CD8-positive, alpha-beta T cell (primary cell): ENCODE measurements at regions of chrX and their contacts with region 1.

Region 1: GRCh38 chrX:53317365-53318069 is 36.1 kb upstream of the IQSEC2 start:
- DNase-seq: peak; percentile 53 to 84 (median 71)
- ATAC-seq: peak; percentile 89
- H3K4me3 ChIP-seq: no peak overlapping the region
- H3K4me3 Mint-ChIP-seq: no peak overlapping the region
- H3K27ac ChIP-seq: no peak overlapping the region
- H3K27ac Mint-ChIP-seq: no peak overlapping the region
- H3K4me1 ChIP-seq: peaks cover 9% of the 10 kb centered on the region
- H3K4me1 Mint-ChIP-seq: peaks cover 17% of the 10 kb centered on the region
- H3K27me3 ChIP-seq: peaks cover 0 to 7% of the 10 kb centered on the region in 2 experiments
- H3K27me3 Mint-ChIP-seq: peaks cover 22% of the 10 kb centered on the region
- CTCF ChIP-seq: peak; percentile 71

Region 2: DNA sequence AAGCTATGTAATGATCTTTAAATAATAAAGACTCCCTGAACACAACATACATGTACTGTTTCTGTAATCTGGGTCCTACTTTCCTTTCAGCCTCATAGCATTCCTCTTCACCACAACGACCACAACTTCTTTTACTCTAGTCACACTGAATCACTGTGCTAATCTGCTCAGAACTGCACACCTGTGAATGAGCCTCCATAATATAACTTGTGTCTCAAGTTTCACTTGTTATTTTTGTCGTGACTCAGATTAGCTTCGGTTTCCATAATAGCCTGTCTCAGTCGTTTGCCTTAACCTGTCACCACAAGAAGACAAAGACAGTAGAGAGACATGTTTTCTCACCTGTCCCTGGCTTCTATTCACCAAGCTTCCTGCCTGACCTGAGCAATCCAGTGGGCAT is 1362.3 kb before region 1 on chrX:
- CTCF ChIA-PET with region 1: no interaction called
- POLR2A ChIA-PET with region 1: no interaction called
- intact Hi-C with region 1: no loop called
- DNase-seq: no peak
- ATAC-seq: no peak
- H3K4me3 ChIP-seq: no peak overlapping the region
- H3K4me3 Mint-ChIP-seq: no peak overlapping the region
- H3K27ac ChIP-seq: no peak overlapping the region
- H3K27ac Mint-ChIP-seq: no peak overlapping the region
- H3K4me1 ChIP-seq: no peaks in the 10 kb centered on the region
- H3K4me1 Mint-ChIP-seq: no peaks in the 10 kb centered on the region
- H3K27me3 ChIP-seq: no peaks in the 10 kb centered on the region
- H3K27me3 Mint-ChIP-seq: peaks cover 2% of the 10 kb centered on the region
- CTCF ChIP-seq: no peak

Region 3: DNA sequence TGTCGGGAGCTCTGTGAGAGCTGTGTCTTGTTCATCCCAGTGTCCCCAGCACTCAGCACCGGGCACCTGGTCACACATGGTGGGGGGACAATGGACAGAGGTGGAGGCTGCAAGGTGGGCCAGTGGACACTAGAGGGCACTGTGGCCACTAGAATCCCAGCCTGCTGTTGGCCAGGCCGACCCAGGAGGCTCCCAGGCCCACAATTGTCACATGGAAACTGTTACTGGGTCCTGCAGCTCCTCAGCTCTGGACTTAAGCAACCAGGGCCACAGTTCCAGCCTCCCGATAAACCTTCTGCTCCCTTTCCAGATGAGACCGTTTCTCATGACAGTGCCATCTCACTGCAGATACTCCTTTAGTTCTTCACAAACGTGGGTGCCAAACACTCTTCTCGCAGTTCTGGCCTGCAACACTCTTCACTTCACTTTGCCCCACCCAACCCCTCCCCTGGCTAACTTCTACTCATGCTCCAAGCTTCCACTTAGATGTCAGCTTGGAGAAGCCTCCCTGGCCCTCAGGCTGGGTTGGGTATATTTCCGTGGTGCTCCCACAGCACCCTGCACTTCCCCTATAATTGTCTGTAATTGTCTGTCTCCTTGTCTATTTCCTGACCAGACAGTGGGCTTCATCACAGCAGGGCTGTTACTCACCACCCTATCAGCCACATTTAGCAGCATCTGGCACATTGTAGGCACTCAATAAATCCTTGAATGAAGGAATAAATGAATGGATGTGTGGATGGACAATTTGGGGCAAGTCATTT is 32.7 kb before region 1 on chrX:
- CTCF ChIA-PET with region 1: interaction called, 36 read pairs
- POLR2A ChIA-PET with region 1: interaction called, 3 read pairs
- intact Hi-C with region 1: no loop called
- DNase-seq: peak; percentile 6 to 74 (median 42)
- ATAC-seq: peak; percentile 68
- H3K4me3 ChIP-seq: no peak overlapping the region
- H3K4me3 Mint-ChIP-seq: no peak overlapping the region
- H3K27ac ChIP-seq: no peak overlapping the region
- H3K27ac Mint-ChIP-seq: no peak overlapping the region
- H3K4me1 ChIP-seq: peaks cover 23% of the 10 kb centered on the region
- H3K4me1 Mint-ChIP-seq: peaks cover 41% of the 10 kb centered on the region
- H3K27me3 ChIP-seq: no peaks in the 10 kb centered on the region
- H3K27me3 Mint-ChIP-seq: peaks cover 2% of the 10 kb centered on the region
- CTCF ChIP-seq: peak; percentile 63

Region 4: DNA sequence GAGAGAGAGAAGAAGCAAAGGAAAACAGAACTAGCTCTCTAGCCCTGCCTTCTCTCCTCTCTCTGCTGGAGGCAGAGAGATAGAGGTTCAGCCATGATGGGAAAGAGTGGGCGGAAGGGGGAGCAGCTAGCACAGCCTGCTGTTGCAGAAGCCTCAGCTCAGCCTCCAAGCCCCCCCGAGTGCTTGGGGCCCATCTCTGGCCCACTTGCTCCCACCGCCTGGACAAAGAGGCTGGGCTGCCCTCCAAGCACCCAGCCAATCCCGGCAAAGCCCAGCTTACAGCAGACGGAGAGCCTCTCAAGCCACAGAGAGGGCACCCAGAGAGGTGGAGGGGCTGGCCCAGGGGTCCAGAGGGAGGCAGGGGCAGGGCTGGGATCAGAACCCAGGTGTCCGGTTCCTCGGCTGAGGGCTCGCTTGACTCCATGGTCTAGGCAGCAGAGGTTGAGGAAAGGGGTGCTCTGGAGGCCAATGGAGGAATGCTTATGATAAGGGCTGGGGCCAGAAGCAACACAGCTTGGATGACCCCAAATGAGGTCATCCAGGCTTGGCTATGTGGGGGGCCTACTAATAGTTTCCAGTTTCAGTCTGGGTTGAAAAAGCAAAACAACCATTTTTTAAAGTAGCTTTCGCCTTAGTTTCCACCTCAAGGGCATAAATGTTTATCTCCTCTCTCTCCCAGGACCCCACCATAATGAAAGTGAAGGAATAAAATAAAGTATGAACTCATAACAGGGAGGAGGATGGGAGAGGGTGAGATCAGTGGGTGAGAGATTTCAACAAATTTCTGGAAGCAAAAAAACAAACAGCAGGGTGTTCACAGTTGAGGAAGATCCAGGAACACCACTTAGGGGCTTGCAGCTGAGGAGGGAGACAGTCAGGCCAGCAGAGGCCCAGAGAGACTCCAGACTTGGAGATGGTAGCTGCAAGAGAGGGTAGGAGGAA is 11.2 kb before region 1 on chrX:
- CTCF ChIA-PET with region 1: interaction called, 30 read pairs
- POLR2A ChIA-PET with region 1: interaction called, 3 read pairs
- intact Hi-C with region 1: no loop called
- DNase-seq: no peak
- ATAC-seq: no peak
- H3K4me3 ChIP-seq: no peak overlapping the region
- H3K4me3 Mint-ChIP-seq: no peak overlapping the region
- H3K27ac ChIP-seq: no peak overlapping the region
- H3K27ac Mint-ChIP-seq: no peak overlapping the region
- H3K4me1 ChIP-seq: no peaks in the 10 kb centered on the region
- H3K4me1 Mint-ChIP-seq: peaks cover 2% of the 10 kb centered on the region
- H3K27me3 ChIP-seq: no peaks in the 10 kb centered on the region
- H3K27me3 Mint-ChIP-seq: no peaks in the 10 kb centered on the region
- CTCF ChIP-seq: no peak

Region 5: GRCh38 chrX:53383376-53384076 is 66.0 kb after region 1 on chrX:
- CTCF ChIA-PET with region 1: interaction called, 3 read pairs
- POLR2A ChIA-PET with region 1: no interaction called
- intact Hi-C with region 1: loop called in 1 of 2 experiments (anchors 10 kb)
- DNase-seq: no peak
- ATAC-seq: no peak
- H3K4me3 ChIP-seq: no peak overlapping the region
- H3K4me3 Mint-ChIP-seq: no peak overlapping the region
- H3K27ac ChIP-seq: no peak overlapping the region
- H3K27ac Mint-ChIP-seq: no peak overlapping the region
- H3K4me1 ChIP-seq: no peaks in the 10 kb centered on the region
- H3K4me1 Mint-ChIP-seq: no peaks in the 10 kb centered on the region
- H3K27me3 ChIP-seq: no peaks in the 10 kb centered on the region
- H3K27me3 Mint-ChIP-seq: no peaks in the 10 kb centered on the region
- CTCF ChIP-seq: no peak

Region 6: GRCh38 chrX:53433651-53434639 is 116.4 kb after region 1 on chrX and contains the start of gene HSD17B10:
- CTCF ChIA-PET with region 1: interaction called, 31 read pairs
- POLR2A ChIA-PET with region 1: no interaction called
- intact Hi-C with region 1: loop called (anchors 1 to 2 kb)
- DNase-seq: peak; percentile 59 to 91 (median 84)
- ATAC-seq: peak; percentile 97
- H3K4me3 ChIP-seq: peak within 1 kb of the TSS; percentile 55 to 74
- H3K4me3 Mint-ChIP-seq: peak within 1 kb of the TSS; percentile 97
- H3K27ac ChIP-seq: peak within 1 kb of the TSS; percentile 71 to 81
- H3K27ac Mint-ChIP-seq: peak within 1 kb of the TSS; percentile 97
- H3K4me1 ChIP-seq: peaks cover 10% of the 10 kb centered on the region
- H3K4me1 Mint-ChIP-seq: peaks cover 16% of the 10 kb centered on the region
- H3K27me3 ChIP-seq: no peaks in the 10 kb centered on the region
- H3K27me3 Mint-ChIP-seq: no peaks in the 10 kb centered on the region
- CTCF ChIP-seq: no peak
- total RNA-seq, gene HSD17B10: 23.4 to 26.2 TPM

Region 7: GRCh38 chrX:53445977-53446376 is 128.5 kb after region 1 on chrX:
- CTCF ChIA-PET with region 1: interaction called, 36 read pairs
- POLR2A ChIA-PET with region 1: interaction called, 4 read pairs
- intact Hi-C with region 1: loop called (anchors 1 kb)
- DNase-seq: peak in 7 of 9 experiments; percentile 24 to 56 (median 43)
- ATAC-seq: peak; percentile 37
- H3K4me3 ChIP-seq: no peak overlapping the region
- H3K4me3 Mint-ChIP-seq: no peak overlapping the region
- H3K27ac ChIP-seq: no peak overlapping the region
- H3K27ac Mint-ChIP-seq: no peak overlapping the region
- H3K4me1 ChIP-seq: peaks cover 4% of the 10 kb centered on the region
- H3K4me1 Mint-ChIP-seq: peaks cover 9% of the 10 kb centered on the region
- H3K27me3 ChIP-seq: no peaks in the 10 kb centered on the region
- H3K27me3 Mint-ChIP-seq: no peaks in the 10 kb centered on the region
- CTCF ChIP-seq: no peak

Region 8: GRCh38 chrX:53481816-53482465 is 164.4 kb after region 1 on chrX:
- CTCF ChIA-PET with region 1: interaction called, 44 read pairs
- POLR2A ChIA-PET with region 1: no interaction called
- intact Hi-C with region 1: loop called (anchors 1 kb)
- DNase-seq: peak; percentile 6 to 66 (median 42)
- ATAC-seq: peak; percentile 52
- H3K4me3 ChIP-seq: no peak overlapping the region
- H3K4me3 Mint-ChIP-seq: no peak overlapping the region
- H3K27ac ChIP-seq: no peak overlapping the region
- H3K27ac Mint-ChIP-seq: no peak overlapping the region
- H3K4me1 ChIP-seq: peaks cover 3% of the 10 kb centered on the region
- H3K4me1 Mint-ChIP-seq: no peaks in the 10 kb centered on the region
- H3K27me3 ChIP-seq: no peaks in the 10 kb centered on the region
- H3K27me3 Mint-ChIP-seq: peaks cover 3% of the 10 kb centered on the region
- CTCF ChIP-seq: peak; percentile 54

Region 9: DNA sequence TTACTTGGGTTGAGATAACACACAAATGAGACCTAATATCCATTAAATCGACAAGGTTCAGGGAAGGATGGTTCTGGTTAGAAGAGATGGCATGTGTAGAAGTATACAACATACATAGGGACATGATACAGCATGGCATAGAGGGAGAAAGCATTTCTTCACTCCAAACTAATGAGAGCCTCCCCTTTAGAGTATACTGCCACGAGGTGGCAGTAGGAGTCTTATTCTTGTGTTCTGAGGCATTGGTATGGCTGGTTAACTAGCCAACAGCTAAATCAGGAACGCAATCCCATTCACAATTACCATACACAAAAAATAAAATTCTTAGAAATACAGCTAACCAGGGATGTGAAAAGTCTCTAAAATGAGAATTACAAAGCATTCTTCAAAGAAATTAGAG is 1574.1 kb after region 1 on chrX:
- CTCF ChIA-PET with region 1: no interaction called
- POLR2A ChIA-PET with region 1: no interaction called
- intact Hi-C with region 1: no loop called
- DNase-seq: peak in 8 of 9 experiments; percentile 1 to 67 (median 25)
- ATAC-seq: peak; percentile 38
- H3K4me3 ChIP-seq: no peak overlapping the region
- H3K4me3 Mint-ChIP-seq: no peak overlapping the region
- H3K27ac ChIP-seq: no peak overlapping the region
- H3K27ac Mint-ChIP-seq: no peak overlapping the region
- H3K4me1 ChIP-seq: no peaks in the 10 kb centered on the region
- H3K4me1 Mint-ChIP-seq: no peaks in the 10 kb centered on the region
- H3K27me3 ChIP-seq: no peaks in the 10 kb centered on the region
- H3K27me3 Mint-ChIP-seq: peaks cover 12% of the 10 kb centered on the region
- CTCF ChIP-seq: peak; percentile 18